ENCODE measurements at regions of chr10 and their contacts with region 1.

Region 1: DNA sequence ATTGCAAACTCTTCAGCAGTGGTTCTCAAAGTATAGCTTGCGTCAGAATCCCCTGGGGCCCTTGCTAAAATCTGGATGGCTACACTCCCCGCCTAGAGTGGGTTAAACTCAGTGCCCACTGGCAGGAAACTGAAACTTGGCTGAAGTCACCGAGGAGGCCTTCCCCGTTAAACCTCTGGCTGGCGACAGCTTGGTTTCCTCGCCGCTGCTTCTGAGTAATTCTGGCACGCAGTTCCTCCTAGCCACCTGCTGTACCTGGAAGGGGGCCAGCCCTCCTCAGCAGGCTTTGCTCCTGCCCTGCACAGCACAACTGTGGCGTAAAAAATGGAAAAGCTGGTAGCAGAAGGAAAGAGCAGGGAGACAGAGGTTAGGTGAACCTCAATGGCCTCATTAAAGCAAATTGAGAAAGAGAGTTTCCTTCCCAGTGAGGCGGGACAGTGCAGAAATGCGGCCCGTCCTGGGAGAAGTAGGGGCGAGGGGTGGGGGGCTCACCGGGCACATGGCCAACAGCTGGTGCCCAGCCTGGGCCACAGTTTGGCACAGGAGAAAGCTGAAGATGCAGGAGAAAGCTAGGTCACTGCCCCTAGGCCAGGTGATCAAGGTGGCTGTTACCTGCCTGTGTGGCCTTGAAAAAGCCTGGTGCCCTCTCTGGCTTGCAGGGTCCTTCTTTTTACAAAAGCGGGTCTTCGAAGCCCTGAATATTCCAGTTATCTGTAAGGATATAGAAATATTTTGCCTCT is 46.6 kb downstream of the ALOX5 start:
- DNase-seq: peak; percentile 72
- ATAC-seq: peak; percentile 54
- H3K4me3 ChIP-seq: peak overlapping the region; percentile 15 to 75 (median 32)
- H3K4me3 Mint-ChIP-seq: peak overlapping the region; percentile 97
- H3K27ac ChIP-seq: peak overlapping the region; percentile 84 to 85
- H3K27ac Mint-ChIP-seq: peak overlapping the region; percentile 94
- H3K4me1 ChIP-seq: peaks cover 49 to 60% of the 10 kb centered on the region in 2 donors
- H3K4me1 Mint-ChIP-seq: peaks cover 67% of the 10 kb centered on the region
- H3K27me3 ChIP-seq: no peaks in the 10 kb centered on the region
- H3K27me3 Mint-ChIP-seq: no peaks in the 10 kb centered on the region
- CTCF ChIP-seq: no peak

Region 2: DNA sequence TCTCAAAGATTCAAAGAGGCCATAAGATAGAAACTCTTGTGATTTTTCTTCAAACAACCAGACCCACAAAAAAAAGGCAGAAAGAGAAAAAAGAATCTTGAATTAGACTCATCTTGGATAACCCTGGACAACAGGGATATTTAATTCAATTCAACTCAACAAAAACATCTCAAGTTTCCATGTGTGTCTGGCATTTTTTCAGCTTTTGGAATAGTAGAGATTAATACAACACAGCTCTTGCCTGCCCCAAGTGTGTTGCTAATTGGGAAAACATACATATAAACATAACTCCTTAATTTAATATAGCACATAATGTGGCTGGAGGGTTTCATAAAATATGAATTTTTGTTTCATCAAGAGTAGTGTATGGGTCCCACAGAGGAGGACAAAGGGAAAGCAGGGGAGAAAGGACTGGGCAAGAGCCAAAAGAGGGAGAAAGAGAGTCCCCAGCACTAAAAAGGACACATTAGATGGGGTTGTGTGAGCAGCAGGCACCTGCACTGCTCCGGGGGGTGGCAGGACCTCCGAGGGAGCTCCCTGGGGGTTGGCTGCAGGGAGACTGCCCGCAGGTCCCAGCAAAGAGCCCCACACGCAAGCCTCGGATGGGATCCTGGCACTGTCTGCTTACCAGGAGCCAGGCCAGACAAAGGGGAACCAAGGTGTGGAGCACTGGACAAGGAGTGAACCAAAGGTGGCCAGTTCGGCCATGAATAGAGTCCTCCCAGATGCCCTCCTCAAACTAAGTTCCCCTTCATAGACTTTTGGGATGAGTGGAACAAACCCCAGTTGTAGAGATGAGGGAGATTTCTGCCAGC is 575.1 kb before region 1 on chr10:
- CTCF ChIA-PET with region 1: no interaction called
- POLR2A ChIA-PET with region 1: no interaction called
- intact Hi-C with region 1: no loop called
- DNase-seq: no peak
- ATAC-seq: no peak
- H3K4me3 ChIP-seq: no peak overlapping the region
- H3K4me3 Mint-ChIP-seq: no peak overlapping the region
- H3K27ac ChIP-seq: no peak overlapping the region
- H3K27ac Mint-ChIP-seq: no peak overlapping the region
- H3K4me1 ChIP-seq: no peaks in the 10 kb centered on the region
- H3K4me1 Mint-ChIP-seq: no peaks in the 10 kb centered on the region
- H3K27me3 ChIP-seq: no peaks in the 10 kb centered on the region
- H3K27me3 Mint-ChIP-seq: peaks cover 19% of the 10 kb centered on the region
- CTCF ChIP-seq: no peak

Region 3: GRCh38 chr10:45249978-45250693 is 170.5 kb before region 1 on chr10:
- CTCF ChIA-PET with region 1: interaction called, 9 read pairs
- POLR2A ChIA-PET with region 1: no interaction called
- intact Hi-C with region 1: loop called (anchors 5 kb)
- DNase-seq: peak; percentile 82
- ATAC-seq: peak; percentile 90
- H3K4me3 ChIP-seq: peak overlapping the region in 4 of 5 experiments; percentile 1 to 56 (median 44)
- H3K4me3 Mint-ChIP-seq: peak overlapping the region; percentile 86
- H3K27ac ChIP-seq: peak overlapping the region; percentile 0 to 60
- H3K27ac Mint-ChIP-seq: peak overlapping the region; percentile 82
- H3K4me1 ChIP-seq: peaks cover 15 to 18% of the 10 kb centered on the region in 2 donors
- H3K4me1 Mint-ChIP-seq: peaks cover 26% of the 10 kb centered on the region
- H3K27me3 ChIP-seq: no peaks in the 10 kb centered on the region
- H3K27me3 Mint-ChIP-seq: peaks cover 7% of the 10 kb centered on the region
- CTCF ChIP-seq: peak; percentile 83

Region 4: GRCh38 chr10:45404087-45404769 is 16.4 kb before region 1 on chr10:
- CTCF ChIA-PET with region 1: no interaction called
- POLR2A ChIA-PET with region 1: no interaction called
- intact Hi-C with region 1: loop called (anchors 2 kb)
- DNase-seq: peak; percentile 33
- ATAC-seq: peak; percentile 77
- H3K4me3 ChIP-seq: no peak overlapping the region
- H3K4me3 Mint-ChIP-seq: no peak overlapping the region
- H3K27ac ChIP-seq: peak overlapping the region in 1 of 2 donors; percentile 40
- H3K27ac Mint-ChIP-seq: no peak overlapping the region
- H3K4me1 ChIP-seq: peaks cover 18 to 24% of the 10 kb centered on the region in 2 donors
- H3K4me1 Mint-ChIP-seq: peaks cover 66% of the 10 kb centered on the region
- H3K27me3 ChIP-seq: no peaks in the 10 kb centered on the region
- H3K27me3 Mint-ChIP-seq: no peaks in the 10 kb centered on the region
- CTCF ChIP-seq: no peak

Region 5: GRCh38 chr10:45491091-45491490 is 70.5 kb after region 1 on chr10:
- CTCF ChIA-PET with region 1: no interaction called
- POLR2A ChIA-PET with region 1: no interaction called
- intact Hi-C with region 1: no loop called
- DNase-seq: no peak
- ATAC-seq: no peak
- H3K4me3 ChIP-seq: no peak overlapping the region
- H3K4me3 Mint-ChIP-seq: no peak overlapping the region
- H3K27ac ChIP-seq: no peak overlapping the region
- H3K27ac Mint-ChIP-seq: no peak overlapping the region
- H3K4me1 ChIP-seq: no peaks in the 10 kb centered on the region
- H3K4me1 Mint-ChIP-seq: peaks cover 27% of the 10 kb centered on the region
- H3K27me3 ChIP-seq: no peaks in the 10 kb centered on the region
- H3K27me3 Mint-ChIP-seq: no peaks in the 10 kb centered on the region
- CTCF ChIP-seq: no peak

Region 6: DNA sequence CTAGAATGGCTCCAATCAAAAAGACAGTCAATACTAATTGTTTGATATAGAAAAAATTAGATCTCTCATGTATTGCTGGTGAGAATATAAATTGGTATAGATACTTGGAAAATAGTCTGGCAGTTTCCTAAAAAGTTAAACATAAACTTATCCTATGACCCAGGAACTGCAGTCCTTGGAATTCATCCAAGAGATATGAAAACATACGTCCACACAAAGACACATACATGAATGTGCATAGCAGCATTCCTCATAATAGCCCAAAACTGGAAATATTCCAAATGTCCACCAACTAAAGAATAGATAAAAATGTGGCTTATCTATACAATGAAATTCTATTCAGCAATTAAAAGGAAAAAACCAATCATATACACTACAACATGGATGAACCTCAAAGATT is 123.6 kb after region 1 on chr10:
- CTCF ChIA-PET with region 1: no interaction called
- POLR2A ChIA-PET with region 1: no interaction called
- intact Hi-C with region 1: no loop called
- DNase-seq: no peak
- ATAC-seq: no peak
- H3K4me3 ChIP-seq: no peak overlapping the region
- H3K4me3 Mint-ChIP-seq: no peak overlapping the region
- H3K27ac ChIP-seq: no peak overlapping the region
- H3K27ac Mint-ChIP-seq: no peak overlapping the region
- H3K4me1 ChIP-seq: peaks cover 0 to 4% of the 10 kb centered on the region in 2 donors
- H3K4me1 Mint-ChIP-seq: peaks cover 27% of the 10 kb centered on the region
- H3K27me3 ChIP-seq: no peaks in the 10 kb centered on the region
- H3K27me3 Mint-ChIP-seq: no peaks in the 10 kb centered on the region
- CTCF ChIP-seq: no peak

Region 7: DNA sequence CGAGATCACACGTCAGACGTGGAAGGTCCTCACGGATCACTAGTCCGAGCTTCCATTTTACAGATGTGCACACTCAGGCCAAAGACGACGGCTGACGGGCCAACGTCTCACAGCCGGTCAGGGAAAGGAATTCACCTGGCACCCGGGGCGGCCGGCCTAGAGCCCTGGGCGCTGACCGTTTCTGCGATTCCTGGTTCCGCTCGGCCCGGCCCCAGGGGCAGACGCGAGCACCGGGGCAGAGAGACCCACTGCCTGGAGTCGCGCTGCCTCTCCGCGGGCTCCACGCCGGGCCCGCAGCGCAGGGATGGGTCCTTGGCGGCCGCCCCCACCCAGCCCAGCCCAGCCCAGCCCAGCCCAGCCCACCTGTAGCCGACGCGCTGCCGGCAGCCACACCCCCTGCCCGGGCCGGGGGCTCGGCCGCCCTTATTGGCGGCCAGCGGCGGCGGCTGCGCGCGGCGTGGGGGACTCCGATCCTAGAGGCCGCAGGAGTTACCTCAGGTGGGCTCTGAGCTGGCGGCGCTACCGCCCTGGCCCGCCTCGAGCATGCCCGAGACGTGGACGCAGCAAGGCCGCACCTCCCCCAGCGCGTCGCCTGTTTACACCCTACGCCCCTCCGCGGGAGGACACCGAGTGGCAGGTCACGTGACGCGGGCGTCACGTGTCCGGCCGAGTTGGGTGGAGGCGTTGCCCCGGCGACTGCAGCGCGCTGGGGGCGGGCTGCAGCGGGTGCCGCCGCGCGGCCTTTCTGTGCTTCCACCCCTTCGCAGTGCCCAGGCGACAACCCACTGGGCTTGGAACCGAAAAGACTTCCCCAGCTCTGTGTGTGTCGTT is 173.9 kb after region 1 on chr10:
- CTCF ChIA-PET with region 1: no interaction called
- POLR2A ChIA-PET with region 1: interaction called, 5 read pairs
- intact Hi-C with region 1: loop called (anchors 1 kb)
- DNase-seq: peak; percentile 95
- ATAC-seq: peak; percentile 88
- H3K4me3 ChIP-seq: peak overlapping the region; percentile 72 to 86 (median 83)
- H3K4me3 Mint-ChIP-seq: peak overlapping the region; percentile 96
- H3K27ac ChIP-seq: peak overlapping the region; percentile 87 to 88
- H3K27ac Mint-ChIP-seq: peak overlapping the region; percentile 98
- H3K4me1 ChIP-seq: peaks cover 26% of the 10 kb centered on the region in 2 donors
- H3K4me1 Mint-ChIP-seq: peaks cover 38% of the 10 kb centered on the region
- H3K27me3 ChIP-seq: no peaks in the 10 kb centered on the region
- H3K27me3 Mint-ChIP-seq: peaks cover 6% of the 10 kb centered on the region
- CTCF ChIP-seq: no peak